Right ventricle myocardium inferior (tissue), 1 donor: ENCODE measurements at regions of chr5 and their contacts with region 1.

Region 1: GRCh38 chr5:16489322-16489791 is 23.8 kb upstream of the ZNF622 start:
- DNase-seq: no peak
- ATAC-seq: peak; percentile 76

Region 2: DNA sequence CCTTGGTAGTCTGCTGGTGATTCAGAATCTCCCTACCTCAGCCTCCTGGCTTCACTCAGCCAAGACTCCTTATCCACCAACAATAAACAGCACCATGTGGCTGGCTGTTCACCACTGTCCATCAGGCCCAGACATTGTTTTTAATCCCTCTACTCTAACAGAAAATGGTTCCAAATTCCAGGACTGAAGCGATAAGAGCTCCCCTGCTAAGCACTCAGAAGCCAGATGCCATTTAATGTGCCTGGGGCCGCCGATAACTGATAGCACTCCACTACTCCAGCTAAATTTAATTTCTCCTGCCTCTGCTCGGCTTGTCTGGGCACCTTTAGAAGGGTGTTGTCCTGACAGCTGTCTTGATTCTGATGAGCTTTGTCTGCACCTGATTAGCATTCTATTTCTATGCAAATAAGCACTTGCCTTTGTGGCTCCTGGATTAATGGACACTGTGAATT is 70.9 kb before region 1 on chr5:
- intact Hi-C with region 1: no loop called
- DNase-seq: no peak
- ATAC-seq: peak; percentile 96

Region 3: GRCh38 chr5:16508730-16509531 is 19.6 kb after region 1 on chr5:
- intact Hi-C with region 1: loop called (anchors 1 kb)
- DNase-seq: peak; percentile 82
- ATAC-seq: peak; percentile 89

Region 4: DNA sequence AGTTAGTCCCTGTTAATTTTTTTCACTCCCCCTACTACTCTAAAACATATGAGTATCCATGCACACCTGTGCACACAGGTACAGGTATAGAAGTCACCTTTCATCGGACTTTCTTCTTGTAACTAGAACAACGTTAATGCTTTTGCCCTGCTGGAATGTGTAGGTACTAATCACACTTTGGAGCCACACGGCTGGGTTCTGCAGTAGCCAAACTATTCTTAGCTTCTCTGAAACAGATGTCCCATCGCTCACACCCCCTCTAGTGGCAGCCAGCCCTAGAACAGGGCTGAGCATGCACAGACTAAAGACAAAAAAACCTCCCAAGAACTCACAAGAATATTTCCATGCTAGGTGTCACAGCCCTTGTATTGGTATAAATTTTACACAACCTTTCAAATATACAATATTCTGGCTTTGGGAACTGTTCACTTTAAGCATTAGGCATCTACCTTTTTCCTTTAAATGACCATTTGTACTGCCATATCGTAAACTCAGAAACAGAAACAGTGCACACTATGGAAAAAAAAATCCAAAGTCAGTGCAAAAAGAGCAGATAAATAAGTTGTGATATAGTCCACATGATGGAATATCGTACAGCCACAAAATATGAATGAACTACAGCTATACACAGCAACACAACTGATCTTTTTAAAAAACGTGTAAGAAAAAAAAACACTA is 63.4 kb after region 1 on chr5:
- intact Hi-C with region 1: loop called (anchors 1 kb)
- DNase-seq: peak; percentile 88
- ATAC-seq: peak; percentile 88

Region 5: DNA sequence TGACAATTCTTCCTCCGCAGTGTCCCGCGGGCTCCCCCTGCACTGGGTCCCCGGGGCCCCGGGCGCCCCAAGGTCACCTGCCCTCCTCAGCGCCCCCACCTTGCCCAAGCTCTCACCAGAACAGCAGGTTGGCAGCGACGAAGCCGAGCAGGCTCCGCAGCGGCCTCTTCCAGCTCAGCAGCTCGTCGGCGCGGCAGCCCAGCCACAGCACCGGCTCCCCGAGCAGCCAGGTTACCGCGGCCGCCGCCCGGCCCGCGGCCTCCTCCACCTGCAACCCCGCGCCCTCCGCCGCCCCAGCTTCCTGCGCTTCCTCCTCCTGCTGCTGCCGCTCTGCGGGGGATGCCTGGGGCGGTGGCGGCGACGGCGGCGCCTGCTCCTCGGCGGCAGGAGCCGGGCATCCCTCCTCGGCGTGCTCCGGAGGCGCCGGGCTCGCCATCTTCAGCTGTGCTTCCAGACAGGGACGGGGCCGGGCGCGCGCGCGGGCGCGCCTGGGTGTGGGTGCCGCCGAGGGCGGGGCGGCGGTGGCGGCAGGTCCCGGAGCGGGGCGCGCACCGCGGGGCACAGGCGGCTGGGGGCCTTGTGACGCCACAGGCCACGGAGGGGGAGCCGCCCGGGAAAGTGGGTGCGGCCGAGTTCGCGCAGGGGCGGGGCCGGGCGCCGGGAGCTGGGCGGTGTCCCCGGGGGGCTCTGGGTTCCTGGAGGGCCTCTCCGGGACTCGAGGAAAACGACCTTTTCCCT is 127.3 kb after region 1 on chr5 and contains the start of gene RETREG1:
- intact Hi-C with region 1: loop called (anchors 5 kb)
- DNase-seq: peak; percentile 88
- ATAC-seq: peak; percentile 89
- total RNA-seq, gene RETREG1: 197 TPM

Region 6: GRCh38 chr5:16666883-16667398 is 177.6 kb after region 1 on chr5:
- intact Hi-C with region 1: loop called (anchors 2 kb)
- DNase-seq: peak; percentile 77
- ATAC-seq: peak; percentile 87

Region 7: DNA sequence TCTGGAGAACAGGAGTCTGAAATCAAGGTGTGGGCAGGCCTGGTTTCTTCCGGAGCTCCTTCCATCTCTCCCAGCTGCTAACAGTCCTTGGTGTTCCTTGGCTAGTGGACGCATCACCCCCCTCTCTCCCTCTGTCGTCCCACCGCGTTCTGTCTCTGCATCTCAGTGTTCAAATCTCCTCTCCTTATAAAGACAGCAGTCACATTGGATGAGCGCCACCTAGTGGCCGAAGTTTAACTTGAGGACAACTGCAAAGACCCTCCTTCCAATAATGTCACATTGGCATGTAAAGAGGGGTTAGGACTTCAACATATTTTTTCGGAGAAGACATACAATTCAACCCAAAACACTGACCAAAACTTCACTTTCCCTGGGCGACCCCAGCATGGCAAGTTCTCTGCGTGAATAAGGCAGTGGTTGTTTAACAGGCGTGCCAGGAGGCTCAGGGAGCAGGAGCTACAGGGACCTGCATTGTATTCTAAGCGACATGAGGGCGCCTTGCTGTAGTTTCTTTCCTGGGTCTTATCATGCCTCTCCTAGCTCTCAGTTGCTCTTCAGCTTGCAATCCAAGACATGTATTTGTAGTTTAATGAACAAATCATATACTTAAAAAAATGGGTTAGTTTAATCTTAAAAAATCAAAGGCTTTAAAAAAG is 700.2 kb after region 1 on chr5:
- intact Hi-C with region 1: loop called (anchors 10 kb)
- DNase-seq: peak; percentile 81
- ATAC-seq: peak; percentile 51